A549 (cell line): ENCODE measurements at regions of chr6 and their contacts with region 1.

Region 1: DNA sequence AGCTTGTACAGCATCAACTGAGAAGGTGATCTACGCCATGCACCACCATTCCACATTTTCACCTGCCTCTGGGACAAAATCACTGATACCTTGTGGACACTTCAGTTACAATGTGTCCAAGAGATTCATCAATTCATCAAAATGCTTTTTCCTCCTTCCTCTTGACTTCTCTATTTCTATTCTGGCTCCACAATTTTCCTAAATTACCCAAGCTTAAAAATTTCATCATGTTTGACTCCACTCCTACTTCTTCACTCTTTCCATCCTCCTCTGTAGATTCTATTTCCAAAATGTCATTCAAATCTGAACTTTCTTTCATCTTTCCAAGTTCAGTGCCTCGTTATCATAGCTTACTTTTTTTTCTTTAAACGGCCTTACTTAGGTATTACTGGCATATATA is 172.2 kb downstream of the BTBD9 start:
- DNase-seq: no peak
- ATAC-seq: no peak
- H3K4me3 ChIP-seq: no peak overlapping the region
- H3K27ac ChIP-seq: no peak overlapping the region
- H3K4me1 ChIP-seq: no peaks in the 10 kb centered on the region
- CTCF ChIP-seq: no peak
- EP300 ChIP-seq: no peak
- POLR2A ChIP-seq: no peak
- RAD21 ChIP-seq: no peak

Region 2: GRCh38 chr6:38443352-38444146 is 24.0 kb before region 1 on chr6:
- CTCF ChIA-PET with region 1: no interaction called
- POLR2A ChIA-PET with region 1: no interaction called
- DNase-seq: no peak
- ATAC-seq: no peak
- H3K4me3 ChIP-seq: no peak overlapping the region
- H3K27ac ChIP-seq: no peak overlapping the region
- H3K4me1 ChIP-seq: no peaks in the 10 kb centered on the region
- CTCF ChIP-seq: no peak
- EP300 ChIP-seq: no peak
- POLR2A ChIP-seq: no peak
- RAD21 ChIP-seq: no peak

Region 3: DNA sequence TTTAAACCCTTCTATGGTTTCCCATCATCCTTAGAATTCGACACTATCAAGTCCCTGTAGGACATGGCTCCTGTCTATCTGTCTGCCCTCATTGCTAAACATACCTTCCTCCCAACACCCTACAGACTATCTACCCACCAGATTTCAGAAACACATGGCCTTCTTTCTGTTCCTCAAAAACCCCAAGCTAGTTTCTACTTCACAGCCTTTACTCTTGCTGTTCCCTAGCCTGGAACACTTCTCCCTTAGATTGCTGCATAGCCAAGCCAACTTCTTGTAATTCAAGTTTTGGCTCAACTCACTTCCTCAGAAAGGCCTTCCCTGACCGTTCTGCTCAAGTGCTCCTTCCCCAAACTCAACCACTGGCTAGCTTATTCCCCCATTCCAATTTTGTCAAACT is 16.0 kb after region 1 on chr6:
- CTCF ChIA-PET with region 1: interaction called, 3 read pairs
- POLR2A ChIA-PET with region 1: interaction called, 10 read pairs
- DNase-seq: no peak
- ATAC-seq: no peak
- H3K4me3 ChIP-seq: no peak overlapping the region
- H3K27ac ChIP-seq: no peak overlapping the region
- H3K4me1 ChIP-seq: no peaks in the 10 kb centered on the region
- CTCF ChIP-seq: no peak
- EP300 ChIP-seq: no peak
- POLR2A ChIP-seq: no peak
- RAD21 ChIP-seq: no peak